Posterior vena cava (tissue), 2 donors: ENCODE measurements at regions of chr13 and their contacts with region 1.

Region 1: GRCh38 chr13:57665481-57665880 is 33.9 kb downstream of the PCDH17 start:
- DNase-seq: no peak

Region 2: DNA sequence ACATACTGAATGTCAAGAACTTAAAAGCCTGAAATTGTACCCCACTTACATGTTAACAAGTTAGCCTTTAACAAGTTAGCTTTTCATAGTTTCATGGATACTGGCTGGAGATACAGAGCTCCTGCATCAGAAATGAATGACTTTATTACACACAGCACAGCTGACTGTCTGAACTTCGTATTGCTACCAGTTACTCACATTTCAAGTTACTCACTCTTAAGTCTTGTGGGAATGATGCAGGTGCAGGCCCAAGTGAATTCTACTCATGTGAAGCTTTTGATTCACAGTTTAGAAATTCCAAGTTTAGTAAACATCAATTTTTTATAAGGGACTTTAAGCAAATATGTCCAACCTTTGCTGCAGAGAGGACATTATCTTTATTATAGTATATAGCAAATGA is 1286.9 kb before region 1 on chr13:
- intact Hi-C with region 1: loop called in 1 of 2 experiments (anchors 10 kb)
- DNase-seq: no peak

Region 3: DNA sequence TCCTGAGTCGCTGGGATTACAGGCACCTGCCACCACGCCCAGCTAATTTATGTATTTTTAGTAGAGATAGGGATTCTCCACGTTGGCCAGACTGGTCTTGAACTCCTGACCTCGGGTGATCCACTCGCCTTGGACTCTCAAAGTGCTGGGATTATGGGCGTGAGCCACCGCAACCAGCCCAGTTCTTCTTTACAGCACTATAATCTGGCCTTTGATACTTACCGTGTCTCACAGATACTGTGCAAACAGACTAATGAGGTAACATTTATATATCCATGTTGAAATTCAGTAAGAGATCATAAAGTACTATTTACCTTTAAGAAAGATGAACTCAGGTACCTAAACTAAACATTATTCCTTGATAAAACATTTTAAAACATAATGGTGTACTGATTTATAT is 646.6 kb before region 1 on chr13:
- intact Hi-C with region 1: loop called in 1 of 2 experiments (anchors 5 kb)
- DNase-seq: no peak

Region 4: GRCh38 chr13:57716295-57716694 is 50.8 kb after region 1 on chr13:
- intact Hi-C with region 1: loop called in 1 of 2 experiments (anchors 2 kb)
- DNase-seq: no peak

Region 5: DNA sequence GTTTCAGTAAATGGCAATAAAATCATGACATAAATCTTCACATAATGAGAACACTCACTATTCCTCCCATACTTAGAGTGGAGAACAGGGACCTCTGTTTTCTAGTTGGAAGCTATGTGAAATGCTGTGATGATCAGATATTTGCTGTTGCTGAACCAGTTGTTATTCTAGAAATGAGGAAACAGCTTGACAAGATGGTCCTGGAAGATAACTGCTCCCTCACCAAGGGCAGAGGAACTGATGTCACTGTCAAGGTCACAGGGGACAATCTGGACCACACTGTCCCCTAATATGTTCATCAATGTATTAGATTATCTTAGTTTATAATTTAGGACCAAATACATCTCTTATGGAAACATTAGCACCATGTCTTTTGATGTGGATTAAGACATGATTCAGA is 1139.4 kb after region 1 on chr13:
- intact Hi-C with region 1: no loop called
- DNase-seq: no peak